Activated CD4-positive, alpha-beta T cell treated with anti-CD3 and anti-CD28 coated beads for 36 hours (primary cell): ENCODE measurements at regions of chr10 and their contacts with region 1.

Region 1: DNA sequence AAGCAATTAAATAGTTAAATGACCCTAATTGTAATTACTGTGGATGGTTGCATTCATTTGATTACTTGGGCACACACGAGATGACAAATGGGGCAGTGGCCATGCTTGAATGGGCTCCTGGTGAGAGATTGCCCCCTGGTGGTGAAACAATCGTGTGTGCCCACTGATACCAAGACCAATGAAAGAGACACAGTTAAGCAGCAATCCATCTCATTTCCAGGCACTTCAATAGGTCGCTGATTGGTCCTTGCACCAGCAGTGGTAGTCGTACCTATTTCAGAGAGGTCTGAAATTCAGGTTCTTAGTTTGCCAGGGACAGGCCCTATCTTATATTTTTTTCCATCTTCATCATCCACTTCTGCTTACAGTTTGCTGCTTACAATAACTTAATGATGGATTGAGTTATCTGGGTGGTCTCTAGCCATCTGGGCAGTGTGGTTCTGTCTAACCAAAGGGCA is 8.3 kb downstream of the PCBD1 start:
- DNase-seq: peak; percentile 86
- ATAC-seq: peak; percentile 94
- H3K4me3 Mint-ChIP-seq: no peak overlapping the region
- H3K27ac Mint-ChIP-seq: no peak overlapping the region
- H3K4me1 Mint-ChIP-seq: peaks cover 10% of the 10 kb centered on the region
- H3K27me3 Mint-ChIP-seq: no peaks in the 10 kb centered on the region

Region 2: GRCh38 chr10:69774596-69774995 is 1105.5 kb before region 1 on chr10:
- CTCF ChIA-PET with region 1: no interaction called
- POLR2A ChIA-PET with region 1: no interaction called
- intact Hi-C with region 1: no loop called
- DNase-seq: no peak
- ATAC-seq: no peak
- H3K4me3 Mint-ChIP-seq: no peak overlapping the region
- H3K27ac Mint-ChIP-seq: no peak overlapping the region
- H3K4me1 Mint-ChIP-seq: no peaks in the 10 kb centered on the region
- H3K27me3 Mint-ChIP-seq: peaks cover 2% of the 10 kb centered on the region

Region 3: GRCh38 chr10:70549962-70550458 is 330.1 kb before region 1 on chr10:
- CTCF ChIA-PET with region 1: no interaction called
- POLR2A ChIA-PET with region 1: no interaction called
- intact Hi-C with region 1: loop called (anchors 1 kb)
- DNase-seq: peak; percentile 83
- ATAC-seq: peak; percentile 91
- H3K4me3 Mint-ChIP-seq: no peak overlapping the region
- H3K27ac Mint-ChIP-seq: no peak overlapping the region
- H3K4me1 Mint-ChIP-seq: no peaks in the 10 kb centered on the region
- H3K27me3 Mint-ChIP-seq: no peaks in the 10 kb centered on the region

Region 4: GRCh38 chr10:70558871-70559810 is 321.0 kb before region 1 on chr10:
- CTCF ChIA-PET with region 1: no interaction called
- POLR2A ChIA-PET with region 1: no interaction called
- intact Hi-C with region 1: loop called in 1 of 2 experiments (anchors 1 kb)
- DNase-seq: peak; percentile 87
- ATAC-seq: peak; percentile 95
- H3K4me3 Mint-ChIP-seq: peak overlapping the region; percentile 60
- H3K27ac Mint-ChIP-seq: peak overlapping the region; percentile 23
- H3K4me1 Mint-ChIP-seq: peaks cover 12% of the 10 kb centered on the region
- H3K27me3 Mint-ChIP-seq: no peaks in the 10 kb centered on the region

Region 5: DNA sequence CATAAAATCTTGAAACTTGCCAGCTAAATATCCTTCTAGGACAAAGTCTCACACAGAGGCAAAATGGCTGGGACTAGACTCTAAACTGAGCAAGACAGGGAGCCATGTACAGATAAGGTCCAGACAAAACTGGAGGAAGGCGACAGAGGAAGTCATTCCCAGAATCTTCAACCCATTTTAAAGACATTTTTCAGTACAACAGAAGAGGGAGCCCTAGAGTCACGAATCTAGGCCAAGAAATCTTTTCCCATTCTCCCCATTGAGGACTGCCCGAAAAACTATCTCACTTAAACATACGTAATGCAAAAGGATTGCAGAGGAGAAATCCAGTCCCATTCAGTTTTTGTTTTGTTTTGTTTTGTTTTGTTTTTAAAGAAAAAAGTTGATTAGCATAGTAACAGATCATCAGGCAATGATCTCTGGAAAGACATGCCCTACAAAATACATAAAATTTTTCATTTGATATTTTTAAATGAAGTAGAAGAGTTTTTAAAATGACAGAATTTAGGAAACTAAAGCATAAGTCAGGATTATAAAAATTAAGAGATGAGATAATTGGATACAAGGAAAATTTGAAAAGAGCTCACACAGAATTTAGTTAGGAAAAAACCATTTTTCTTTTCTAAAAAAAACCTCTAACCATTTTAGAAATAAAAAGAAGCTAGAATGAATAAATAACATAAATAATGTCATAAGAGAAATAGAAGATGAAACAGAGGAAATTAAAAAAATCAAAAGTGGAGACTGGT is 260.7 kb before region 1 on chr10:
- CTCF ChIA-PET with region 1: interaction called, 4 read pairs
- POLR2A ChIA-PET with region 1: no interaction called
- intact Hi-C with region 1: loop called in 1 of 2 experiments (anchors 5 kb)
- DNase-seq: no peak
- ATAC-seq: no peak
- H3K4me3 Mint-ChIP-seq: no peak overlapping the region
- H3K27ac Mint-ChIP-seq: no peak overlapping the region
- H3K4me1 Mint-ChIP-seq: peaks cover 16% of the 10 kb centered on the region
- H3K27me3 Mint-ChIP-seq: peaks cover 10% of the 10 kb centered on the region

Region 6: GRCh38 chr10:70838270-70838805 is 41.8 kb before region 1 on chr10:
- CTCF ChIA-PET with region 1: interaction called, 17 read pairs
- POLR2A ChIA-PET with region 1: no interaction called
- intact Hi-C with region 1: no loop called
- DNase-seq: no peak
- ATAC-seq: no peak
- H3K4me3 Mint-ChIP-seq: no peak overlapping the region
- H3K27ac Mint-ChIP-seq: peak overlapping the region; percentile 65
- H3K4me1 Mint-ChIP-seq: peaks cover 70% of the 10 kb centered on the region
- H3K27me3 Mint-ChIP-seq: no peaks in the 10 kb centered on the region